Heart right ventricle (tissue), 16 donors: ENCODE measurements at regions of chr11 and their contacts with region 1.

Region 1: DNA sequence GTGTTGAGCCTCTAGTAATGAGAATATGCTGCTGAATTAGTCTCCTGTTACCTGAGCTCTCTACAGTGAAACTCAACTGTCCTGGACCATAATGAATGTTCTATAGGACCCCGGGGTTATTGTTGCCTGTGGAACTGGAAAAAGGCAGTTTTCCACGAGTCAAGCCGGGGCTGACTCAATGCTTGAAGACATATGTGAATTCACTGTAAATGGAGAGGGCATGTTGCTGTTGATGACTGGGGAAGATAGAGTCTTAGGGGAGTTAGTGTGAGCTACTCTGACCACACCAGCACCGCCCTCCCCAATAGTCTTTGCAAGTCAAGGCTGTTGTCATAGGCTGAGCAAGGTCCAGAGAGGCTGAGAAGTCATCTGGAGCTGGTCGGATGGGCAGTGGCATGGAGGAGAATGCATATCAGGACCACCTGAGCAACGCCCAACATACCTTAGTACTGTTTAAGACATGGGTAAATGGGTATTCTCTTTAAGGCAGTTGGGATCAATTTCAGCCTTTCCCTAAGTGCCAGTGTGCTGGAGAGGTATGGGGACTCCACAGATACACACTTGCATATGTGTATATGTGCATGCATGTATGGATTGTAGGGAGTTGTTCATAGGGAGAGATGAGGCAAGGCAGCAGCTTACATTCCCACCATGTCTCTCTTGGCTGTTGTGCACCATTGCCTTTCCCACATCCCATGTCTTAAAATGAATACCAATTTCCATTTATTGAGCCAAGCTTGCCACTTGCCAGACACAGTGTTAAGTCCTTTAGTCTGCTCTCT is 230.1 kb upstream of the NAV2 start:
- DNase-seq: no peak
- ATAC-seq: no peak
- H3K4me3 ChIP-seq: no peak overlapping the region
- H3K27ac ChIP-seq: no peak overlapping the region
- H3K4me1 ChIP-seq: no peaks in the 10 kb centered on the region
- H3K27me3 ChIP-seq: peaks cover 0 to 13% (median 0%) of the 10 kb centered on the region in 7 donors
- CTCF ChIP-seq: no peak

Region 2: DNA sequence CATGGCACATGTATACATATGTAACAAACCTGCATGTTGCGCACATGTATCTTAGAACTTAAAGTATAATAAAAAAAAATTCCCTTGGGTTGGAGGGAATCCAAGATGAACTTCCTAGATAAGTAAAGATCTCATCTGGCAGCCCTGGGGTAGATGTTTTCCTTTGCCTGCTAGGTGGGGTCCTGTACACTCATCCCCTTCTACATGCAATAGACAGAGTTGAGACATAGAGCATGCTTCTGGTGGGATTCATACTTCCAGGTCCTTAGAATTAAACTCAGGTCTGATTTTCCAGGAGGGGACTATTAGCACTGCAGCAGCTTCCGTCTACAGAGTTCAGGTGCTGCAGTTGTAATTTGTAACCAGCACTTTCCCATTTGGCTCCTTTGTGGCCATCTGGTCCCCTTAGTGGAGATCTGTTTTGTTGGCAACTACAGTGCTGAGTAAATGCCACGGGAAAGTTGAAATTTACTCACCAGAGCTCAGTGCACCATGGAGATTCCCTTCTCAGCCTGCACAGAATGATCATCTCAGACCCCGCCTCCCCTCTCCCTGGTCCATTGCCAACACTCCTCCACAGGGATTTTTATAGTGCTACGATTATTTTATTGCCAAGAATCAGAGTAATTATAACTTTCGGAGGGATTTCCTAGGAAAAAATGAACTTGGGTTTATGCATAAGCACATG is 21.6 kb before region 1 on chr11:
- intact Hi-C with region 1: loop called in 1 of 10 experiments (anchors 1 kb)
- DNase-seq: peak; percentile 20 to 56
- ATAC-seq: peak in 5 of 8 donors; percentile 27 to 63 (median 49)
- H3K4me3 ChIP-seq: no peak overlapping the region
- H3K27ac ChIP-seq: no peak overlapping the region
- H3K4me1 ChIP-seq: peaks cover 0 to 9% (median 5%) of the 10 kb centered on the region in 9 donors
- H3K27me3 ChIP-seq: no peaks in the 10 kb centered on the region
- CTCF ChIP-seq: no peak